ENCODE measurements at regions of chr2 and their contacts with region 1.

Region 1: DNA sequence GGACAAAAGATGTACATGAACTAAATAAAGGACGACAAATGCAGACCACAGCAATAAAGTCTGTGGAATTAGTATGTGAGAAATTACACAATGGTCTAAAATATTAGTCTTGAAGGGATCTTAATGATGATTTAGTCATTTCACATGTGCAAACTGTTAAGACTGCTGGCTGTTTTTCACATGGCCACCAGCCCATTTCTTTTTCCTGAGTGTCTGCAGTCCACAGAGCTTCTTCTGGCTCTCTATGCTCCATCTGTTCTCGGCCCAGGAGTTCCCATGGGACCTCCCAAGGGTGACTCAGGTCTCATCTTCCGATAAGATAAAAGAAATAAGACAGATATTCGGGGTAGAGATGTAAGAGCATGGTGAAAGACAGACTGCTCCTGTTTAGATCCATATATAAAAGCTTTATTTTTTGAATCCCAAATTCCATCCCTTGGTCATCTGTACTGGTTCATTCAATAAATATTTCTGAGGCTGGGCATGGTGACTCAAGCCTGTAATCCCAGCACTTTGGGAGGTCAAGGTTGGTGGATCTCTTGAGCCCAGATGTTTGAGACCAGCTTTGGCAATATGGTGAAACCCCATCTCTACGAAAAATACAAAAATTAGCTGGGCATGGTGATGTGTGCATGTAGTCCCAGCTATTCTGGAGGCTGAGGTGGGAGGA is 20.1 kb downstream of the IL1RL1 start:
- DNase-seq: no peak
- H3K4me3 ChIP-seq: no peak overlapping the region
- CTCF ChIP-seq: no peak

Region 2: GRCh38 chr2:102294802-102295489 is 36.5 kb before region 1 on chr2:
- in situ Hi-C with region 1: loop called (anchors 5 kb)
- DNase-seq: no peak
- H3K4me3 ChIP-seq: no peak overlapping the region
- CTCF ChIP-seq: no peak

Region 3: DNA sequence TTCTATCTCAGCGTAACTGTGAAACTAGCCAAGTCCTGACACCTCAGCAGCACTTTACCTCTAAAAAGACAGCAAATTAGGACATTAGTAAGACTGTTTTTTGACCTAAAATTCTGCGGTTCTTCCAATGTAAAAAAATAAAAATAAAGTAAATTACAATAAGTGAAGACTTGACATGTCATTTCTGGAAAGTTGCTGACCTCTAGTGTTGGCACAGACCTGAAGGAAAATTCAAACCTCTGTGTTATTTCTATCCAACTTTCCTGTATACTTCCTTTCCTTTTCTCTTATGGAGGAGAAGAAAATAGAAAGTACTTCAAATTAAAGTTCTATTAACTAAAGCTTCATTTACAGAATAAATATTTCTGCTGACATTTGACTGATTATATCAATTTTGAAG is 540.9 kb after region 1 on chr2:
- in situ Hi-C with region 1: no loop called
- DNase-seq: no peak
- H3K4me3 ChIP-seq: no peak overlapping the region
- CTCF ChIP-seq: no peak